CD14-positive monocyte (primary cell): ENCODE measurements at regions of chr1 and their contacts with region 1.

Region 1: GRCh38 chr1:19390901-19391595 is 78.9 kb downstream of the SLC66A1 start:
- DNase-seq: peak; percentile 21 to 49 (median 31)
- H3K4me3 ChIP-seq: peak overlapping the region in 1 of 3 experiments; percentile 48
- H3K4me3 Mint-ChIP-seq: peak overlapping the region; percentile 52 to 74
- H3K27ac ChIP-seq: peak overlapping the region; percentile 47 to 63
- H3K27ac Mint-ChIP-seq: peak overlapping the region; percentile 58 to 85 (median 76)
- H3K4me1 ChIP-seq: peaks cover 19 to 22% of the 10 kb centered on the region in 2 donors
- H3K4me1 Mint-ChIP-seq: peaks cover 39% of the 10 kb centered on the region
- H3K27me3 ChIP-seq: no peaks in the 10 kb centered on the region
- H3K27me3 Mint-ChIP-seq: no peaks in the 10 kb centered on the region
- CTCF ChIP-seq: peak; percentile 88

Region 2: GRCh38 chr1:19477284-19478249 is 86.5 kb after region 1 on chr1:
- intact Hi-C with region 1: loop called in 1 of 2 experiments (anchors 5 kb)
- DNase-seq: peak; percentile 69 to 71 (median 71)
- H3K4me3 ChIP-seq: peak overlapping the region; percentile 2 to 60 (median 21)
- H3K4me3 Mint-ChIP-seq: peak overlapping the region; percentile 74 to 91
- H3K27ac ChIP-seq: peak overlapping the region; percentile 83 to 92
- H3K27ac Mint-ChIP-seq: peak overlapping the region; percentile 95 to 98 (median 96)
- H3K4me1 ChIP-seq: peaks cover 60 to 74% of the 10 kb centered on the region in 2 donors
- H3K4me1 Mint-ChIP-seq: peaks cover 80% of the 10 kb centered on the region
- H3K27me3 ChIP-seq: no peaks in the 10 kb centered on the region
- H3K27me3 Mint-ChIP-seq: peaks cover 0 to 4% (median 0%) of the 10 kb centered on the region in 3 donors
- CTCF ChIP-seq: no peak

Region 3: DNA sequence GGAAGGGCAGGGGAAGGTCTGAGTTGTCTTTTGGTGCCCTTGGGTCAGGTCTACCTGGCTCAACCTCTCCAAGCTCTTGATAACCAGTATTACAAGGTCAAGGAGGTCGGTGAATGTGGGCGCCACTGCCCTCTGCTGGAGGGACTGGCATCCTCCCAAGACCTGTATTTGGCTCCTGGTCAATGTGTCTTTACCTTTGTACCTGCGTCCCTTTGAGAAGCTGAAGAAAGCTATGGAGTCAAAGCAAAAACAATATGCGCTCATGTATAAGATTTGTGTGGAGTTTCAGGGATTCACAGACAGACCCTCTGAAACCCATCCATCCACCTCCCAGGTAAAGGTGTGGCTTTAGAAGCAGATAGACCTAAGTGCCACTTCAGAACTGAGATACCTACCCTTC is 191.3 kb after region 1 on chr1:
- intact Hi-C with region 1: loop called (anchors 1 to 2 kb)
- DNase-seq: peak; percentile 55 to 74 (median 68)
- H3K4me3 ChIP-seq: no peak overlapping the region
- H3K4me3 Mint-ChIP-seq: no peak overlapping the region
- H3K27ac ChIP-seq: no peak overlapping the region
- H3K27ac Mint-ChIP-seq: no peak overlapping the region
- H3K4me1 ChIP-seq: peaks cover 25 to 31% of the 10 kb centered on the region in 2 donors
- H3K4me1 Mint-ChIP-seq: peaks cover 35% of the 10 kb centered on the region
- H3K27me3 ChIP-seq: no peaks in the 10 kb centered on the region
- H3K27me3 Mint-ChIP-seq: peaks cover 2 to 16% (median 3%) of the 10 kb centered on the region in 3 donors
- CTCF ChIP-seq: peak; percentile 96

Region 4: DNA sequence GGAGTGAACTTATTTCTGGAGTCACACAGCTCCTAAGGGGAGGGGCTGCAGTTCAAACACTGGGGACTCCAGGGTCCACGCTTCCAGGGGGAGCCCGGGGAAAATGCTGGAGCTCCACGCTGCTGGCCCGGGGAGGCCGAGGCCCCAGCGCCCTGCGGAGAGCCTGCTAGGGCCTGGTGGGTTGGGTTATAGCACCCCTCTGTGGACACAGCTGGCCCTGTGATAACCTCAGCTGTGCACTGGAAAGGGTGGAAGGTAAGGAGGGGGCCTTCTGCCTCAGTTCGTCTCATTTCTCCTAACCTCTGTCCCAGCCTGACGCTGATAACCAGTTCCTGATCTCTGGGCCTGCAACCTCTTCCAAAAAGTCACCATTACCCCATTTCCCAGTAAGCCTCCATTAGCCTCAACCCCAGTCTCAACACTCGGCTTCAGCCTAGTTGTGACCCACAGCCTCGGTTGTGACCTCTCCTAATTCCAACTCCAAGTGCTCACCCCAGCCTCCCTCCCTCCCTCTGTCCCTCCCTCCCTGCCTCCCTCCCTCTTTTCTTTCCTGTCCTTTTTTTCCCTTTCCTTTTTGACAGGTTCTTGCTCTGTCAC is 260.2 kb after region 1 on chr1:
- intact Hi-C with region 1: loop called (anchors 1 to 2 kb)
- DNase-seq: peak in 2 of 3 donors; percentile 4 to 15
- H3K4me3 ChIP-seq: no peak overlapping the region
- H3K4me3 Mint-ChIP-seq: no peak overlapping the region
- H3K27ac ChIP-seq: no peak overlapping the region
- H3K27ac Mint-ChIP-seq: no peak overlapping the region
- H3K4me1 ChIP-seq: no peaks in the 10 kb centered on the region
- H3K4me1 Mint-ChIP-seq: peaks cover 9% of the 10 kb centered on the region
- H3K27me3 ChIP-seq: peaks cover 6 to 21% of the 10 kb centered on the region in 2 donors
- H3K27me3 Mint-ChIP-seq: peaks cover 23 to 45% (median 26%) of the 10 kb centered on the region in 3 donors
- CTCF ChIP-seq: peak; percentile 51